ENCODE measurements at regions of chr16 and their contacts with region 1.

Region 1: DNA sequence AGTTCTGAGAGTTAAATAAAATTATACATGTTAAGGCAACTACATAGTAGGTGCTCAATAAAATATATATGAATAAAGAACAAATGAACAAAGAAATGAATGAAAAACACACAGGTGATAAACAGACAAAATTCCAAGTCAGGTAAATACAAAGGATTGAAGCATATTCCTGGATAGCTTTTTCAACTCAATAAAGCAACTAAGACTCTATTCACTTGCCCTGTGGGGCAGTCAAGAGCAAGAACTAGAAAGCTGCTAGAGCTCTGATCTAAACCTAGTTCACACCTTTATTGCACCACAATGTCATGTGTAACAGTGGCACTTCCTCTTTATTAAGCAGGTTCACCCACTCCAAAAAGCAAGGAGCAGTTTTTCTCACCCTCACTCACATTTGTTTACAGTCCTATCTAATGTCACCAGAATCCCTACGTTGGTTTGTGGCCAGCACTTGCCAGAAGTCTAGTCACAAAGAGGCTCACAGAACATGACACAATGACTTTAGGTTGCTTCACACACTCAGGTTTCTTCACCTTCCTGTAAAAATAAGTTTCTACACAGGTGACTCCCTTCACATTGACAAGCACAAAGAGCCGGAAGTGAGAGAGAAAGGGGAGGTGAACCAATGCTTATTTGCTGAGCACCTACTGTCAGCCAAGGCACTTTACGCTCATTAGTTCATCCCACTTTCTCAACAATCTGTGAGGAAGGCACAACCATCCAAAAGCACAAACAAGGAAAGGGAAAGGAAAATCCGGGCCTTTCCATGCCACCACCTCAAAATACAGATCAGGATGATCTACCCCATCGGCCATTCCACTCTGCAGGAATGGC is 70.8 kb downstream of the XPO6 start:
- DNase-seq: peak; percentile 48 to 98 (median 72)
- ATAC-seq: peak; percentile 75
- H3K4me3 ChIP-seq: peak overlapping the region; percentile 37 to 39
- H3K4me3 Mint-ChIP-seq: peak overlapping the region; percentile 81
- H3K27ac ChIP-seq: peak overlapping the region; percentile 88 to 91
- H3K27ac Mint-ChIP-seq: peak overlapping the region; percentile 98
- H3K4me1 ChIP-seq: peaks cover 93% of the 10 kb centered on the region
- H3K4me1 Mint-ChIP-seq: peaks cover 86% of the 10 kb centered on the region
- H3K27me3 ChIP-seq: no peaks in the 10 kb centered on the region
- H3K27me3 Mint-ChIP-seq: no peaks in the 10 kb centered on the region
- CTCF ChIP-seq: no peak

Region 2: DNA sequence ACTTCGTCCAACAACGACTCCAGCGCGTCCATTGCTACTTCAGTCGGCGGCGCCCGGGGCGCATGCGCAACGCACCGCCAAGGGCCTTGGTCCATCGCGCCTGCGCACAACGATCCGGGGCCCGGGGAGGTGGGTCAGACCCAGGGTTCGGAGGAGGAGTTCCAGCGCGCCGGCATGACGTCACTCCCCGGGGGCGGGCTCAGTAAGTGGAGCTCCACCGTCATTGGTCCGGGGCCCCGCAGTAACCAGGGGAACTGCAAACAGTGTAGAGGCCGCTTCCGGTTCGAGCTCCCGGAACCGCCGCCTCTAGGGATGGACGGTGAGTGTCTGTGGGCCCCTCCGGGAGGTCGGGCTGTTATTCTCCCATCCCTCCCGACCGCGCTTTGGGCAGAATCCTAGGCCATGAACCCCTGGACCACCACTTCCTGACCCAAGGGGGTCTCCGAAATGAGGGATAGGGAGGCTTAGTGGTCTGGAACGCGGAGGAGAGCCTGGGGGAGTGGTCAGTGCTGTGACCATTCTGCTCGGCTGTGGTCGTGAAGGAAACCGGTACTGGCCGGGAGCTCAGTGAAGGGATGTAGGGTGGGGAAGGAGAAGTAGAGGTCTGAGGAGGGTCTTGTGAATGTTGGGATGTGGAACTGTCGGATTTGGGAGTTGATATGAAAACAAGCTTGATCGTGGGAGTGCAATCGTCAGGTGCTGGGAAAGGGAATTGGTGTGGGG is 591.0 kb before region 1 on chr16 and contains the starts of genes GTF3C1 and KATNIP:
- CTCF ChIA-PET with region 1: no interaction called
- POLR2A ChIA-PET with region 1: no interaction called
- intact Hi-C with region 1: loop called in 1 of 2 experiments (anchors 5 kb)
- DNase-seq: peak; percentile 99 to 100 (median 100)
- ATAC-seq: peak; percentile 100
- H3K4me3 ChIP-seq: peak within 1 kb of the TSS; percentile 97
- H3K4me3 Mint-ChIP-seq: peak within 1 kb of the TSS; percentile 92
- H3K27ac ChIP-seq: peak within 1 kb of the TSS; percentile 91 to 94
- H3K27ac Mint-ChIP-seq: peak within 1 kb of the TSS; percentile 94
- H3K4me1 ChIP-seq: peaks cover 29% of the 10 kb centered on the region
- H3K4me1 Mint-ChIP-seq: peaks cover 46% of the 10 kb centered on the region
- H3K27me3 ChIP-seq: no peaks in the 10 kb centered on the region
- H3K27me3 Mint-ChIP-seq: no peaks in the 10 kb centered on the region
- CTCF ChIP-seq: no peak
- total RNA-seq, gene GTF3C1: 110 to 114 TPM
- total RNA-seq, gene KATNIP: 16.0 to 18.9 TPM

Region 3: DNA sequence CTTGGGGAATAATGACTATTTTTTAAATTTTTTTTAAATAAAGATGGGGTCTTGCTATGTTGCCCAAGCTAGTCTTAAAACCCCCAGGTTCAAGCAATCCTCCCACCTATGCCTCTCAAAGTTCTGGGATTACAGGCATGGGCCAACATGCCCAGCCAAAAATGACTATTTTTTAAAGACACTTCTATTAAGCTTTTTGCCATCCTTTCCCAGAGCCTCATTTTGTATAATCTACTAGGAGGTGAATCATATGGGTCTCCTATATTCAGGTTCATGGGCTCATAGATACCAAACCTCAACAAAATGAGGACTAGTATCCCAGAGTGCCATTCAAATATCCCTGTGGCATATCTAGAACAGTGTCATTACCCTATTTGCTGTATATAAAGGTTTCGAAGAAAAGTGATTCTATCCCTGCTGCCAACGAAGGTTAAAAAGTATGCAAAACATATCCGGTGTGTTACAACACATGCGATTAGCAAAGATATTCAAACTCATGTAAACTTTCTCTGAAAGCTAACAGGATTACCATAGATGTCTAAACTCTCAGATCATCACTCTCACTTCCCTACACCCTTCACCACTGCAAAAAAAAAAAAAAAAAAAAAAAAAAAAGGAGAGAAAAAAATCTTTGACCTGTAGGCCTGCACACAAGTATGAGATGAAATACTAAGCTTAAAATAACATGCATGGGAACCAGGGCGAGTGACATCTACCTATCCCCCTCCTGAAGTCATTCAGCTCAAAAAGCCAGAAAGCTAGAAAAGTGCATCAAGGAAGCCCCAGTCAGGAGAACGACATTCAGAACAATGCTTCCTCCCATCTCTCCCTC is 47.3 kb after region 1 on chr16:
- CTCF ChIA-PET with region 1: interaction called, 11 read pairs
- POLR2A ChIA-PET with region 1: interaction called, 12 read pairs
- intact Hi-C with region 1: loop called (anchors 1 kb)
- DNase-seq: peak in 1 of 9 experiments; percentile 38
- ATAC-seq: no peak
- H3K4me3 ChIP-seq: peak overlapping the region in 1 of 2 experiments; percentile 21
- H3K4me3 Mint-ChIP-seq: peak overlapping the region; percentile 66
- H3K27ac ChIP-seq: peak overlapping the region; percentile 26 to 79
- H3K27ac Mint-ChIP-seq: peak overlapping the region; percentile 98
- H3K4me1 ChIP-seq: peaks cover 85% of the 10 kb centered on the region
- H3K4me1 Mint-ChIP-seq: peaks cover 87% of the 10 kb centered on the region
- H3K27me3 ChIP-seq: no peaks in the 10 kb centered on the region
- H3K27me3 Mint-ChIP-seq: no peaks in the 10 kb centered on the region
- CTCF ChIP-seq: no peak

Region 4: DNA sequence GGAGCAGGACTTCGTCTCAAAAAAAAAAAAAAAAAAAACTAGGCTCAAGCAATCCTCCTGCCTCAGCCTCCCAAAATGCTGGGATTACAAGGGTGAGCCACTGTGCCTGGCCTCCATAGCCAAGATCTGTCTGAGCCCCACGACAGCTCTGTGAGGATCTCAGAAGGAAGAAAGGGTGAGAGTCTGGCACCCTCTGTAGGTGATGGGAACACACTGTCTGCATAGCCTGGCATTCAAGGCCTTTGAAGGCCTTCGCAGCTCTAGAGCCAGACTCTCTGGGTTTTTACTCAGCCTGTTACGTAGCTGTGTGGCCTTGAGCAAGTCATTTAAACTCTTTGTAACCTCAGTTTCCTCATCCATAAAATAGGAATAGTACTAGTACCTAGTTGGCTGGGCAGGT is 77.1 kb after region 1 on chr16:
- CTCF ChIA-PET with region 1: interaction called, 394 read pairs
- POLR2A ChIA-PET with region 1: interaction called, 49 read pairs
- intact Hi-C with region 1: loop called (anchors 1 kb)
- DNase-seq: peak; percentile 40 to 89 (median 65)
- ATAC-seq: peak; percentile 100
- H3K4me3 ChIP-seq: no peak overlapping the region
- H3K4me3 Mint-ChIP-seq: no peak overlapping the region
- H3K27ac ChIP-seq: no peak overlapping the region
- H3K27ac Mint-ChIP-seq: peak overlapping the region; percentile 71
- H3K4me1 ChIP-seq: no peaks in the 10 kb centered on the region
- H3K4me1 Mint-ChIP-seq: peaks cover 5% of the 10 kb centered on the region
- H3K27me3 ChIP-seq: no peaks in the 10 kb centered on the region
- H3K27me3 Mint-ChIP-seq: no peaks in the 10 kb centered on the region
- CTCF ChIP-seq: peak; percentile 66

Region 5: GRCh38 chr16:28309811-28310311 is 168.9 kb after region 1 on chr16:
- CTCF ChIA-PET with region 1: no interaction called
- POLR2A ChIA-PET with region 1: interaction called, 3 read pairs
- intact Hi-C with region 1: loop called in 1 of 2 experiments (anchors 1 kb)
- DNase-seq: peak; percentile 72 to 97 (median 92)
- ATAC-seq: peak; percentile 88
- H3K4me3 ChIP-seq: peak overlapping the region; percentile 0 to 48
- H3K4me3 Mint-ChIP-seq: peak overlapping the region; percentile 54
- H3K27ac ChIP-seq: peak overlapping the region; percentile 70 to 83
- H3K27ac Mint-ChIP-seq: peak overlapping the region; percentile 95
- H3K4me1 ChIP-seq: peaks cover 75% of the 10 kb centered on the region
- H3K4me1 Mint-ChIP-seq: peaks cover 76% of the 10 kb centered on the region
- H3K27me3 ChIP-seq: no peaks in the 10 kb centered on the region
- H3K27me3 Mint-ChIP-seq: no peaks in the 10 kb centered on the region
- CTCF ChIP-seq: no peak

Region 6: GRCh38 chr16:28924732-28925385 is 783.9 kb after region 1 on chr16 and contains the start of gene RABEP2:
- CTCF ChIA-PET with region 1: no interaction called
- POLR2A ChIA-PET with region 1: no interaction called
- intact Hi-C with region 1: loop called in 1 of 2 experiments (anchors 10 kb)
- DNase-seq: peak; percentile 92 to 99 (median 94)
- ATAC-seq: peak; percentile 77
- H3K4me3 ChIP-seq: peak within 1 kb of the TSS; percentile 96 to 97
- H3K4me3 Mint-ChIP-seq: peak within 1 kb of the TSS; percentile 94
- H3K27ac ChIP-seq: peak within 1 kb of the TSS; percentile 98
- H3K27ac Mint-ChIP-seq: peak within 1 kb of the TSS; percentile 97
- H3K4me1 ChIP-seq: peaks cover 10% of the 10 kb centered on the region
- H3K4me1 Mint-ChIP-seq: peaks cover 25% of the 10 kb centered on the region
- H3K27me3 ChIP-seq: no peaks in the 10 kb centered on the region
- H3K27me3 Mint-ChIP-seq: no peaks in the 10 kb centered on the region
- CTCF ChIP-seq: no peak
- total RNA-seq, gene RABEP2: 26.5 to 29.0 TPM

Measured in CD8-positive, alpha-beta T cell (primary cell).